GM12878 (cell line): ENCODE measurements at regions of chr6 and their contacts with region 1.

Region 1: GRCh38 chr6:32666420-32667300 is at the start of gene HLA-DQB1:
- DNase-seq: peak; percentile 77
- ATAC-seq: peak; percentile 70
- H3K4me3 ChIP-seq: peak within 1 kb of the TSS; percentile 55; the same call in 1 of the 2 replicates
- H3K27ac ChIP-seq: peak within 1 kb of the TSS; percentile 92
- H3K4me1 ChIP-seq: peaks cover 22% of the 10 kb centered on the region
- H3K27me3 ChIP-seq: no peaks in the 10 kb centered on the region
- CTCF ChIP-seq: no peak
- EP300 ChIP-seq: no peak
- POLR2A ChIP-seq: peak; percentile 72
- RAD21 ChIP-seq: no peak
- polyA plus RNA-seq, gene HLA-DQB1: 38.1 to 66.1 TPM

Region 2: DNA sequence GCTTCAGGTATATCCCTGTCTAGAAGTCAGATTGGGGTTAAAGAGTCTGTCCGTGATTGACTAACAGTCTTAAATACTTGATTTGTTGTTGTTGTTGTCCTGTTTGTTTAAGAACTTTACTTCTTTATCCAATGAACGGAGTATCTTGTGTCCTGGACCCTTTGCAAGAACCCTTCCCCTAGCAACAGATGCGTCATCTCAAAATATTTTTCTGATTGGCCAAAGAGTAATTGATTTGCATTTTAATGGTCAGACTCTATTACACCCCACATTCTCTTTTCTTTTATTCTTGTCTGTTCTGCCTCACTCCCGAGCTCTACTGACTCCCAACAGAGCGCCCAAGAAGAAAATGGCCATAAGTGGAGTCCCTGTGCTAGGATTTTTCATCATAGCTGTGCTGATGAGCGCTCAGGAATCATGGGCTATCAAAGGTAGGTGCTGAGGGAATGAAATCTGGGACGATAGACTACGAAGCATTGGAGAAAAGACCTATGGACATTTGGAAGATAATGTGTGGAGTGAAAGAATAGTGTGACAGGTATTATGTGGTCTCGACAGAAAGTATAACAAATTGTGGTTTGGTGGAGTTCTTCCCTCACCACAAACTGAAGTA is 227.0 kb before region 1 on chr6 and contains the start of gene HLA-DRA:
- CTCF ChIA-PET with region 1: no interaction called
- POLR2A ChIA-PET with region 1: interaction called, 20 read pairs
- RAD21 ChIA-PET with region 1: interaction called, 8 read pairs
- SMC1A ChIA-PET with region 1: interaction called, 6 read pairs
- in situ Hi-C with region 1: no loop called
- intact Hi-C with region 1: no loop called
- DNase-seq: peak; percentile 99
- ATAC-seq: peak; percentile 71
- H3K4me3 ChIP-seq: peak within 1 kb of the TSS; percentile 99
- H3K27ac ChIP-seq: peak within 1 kb of the TSS; percentile 100
- H3K4me1 ChIP-seq: peaks cover 29% of the 10 kb centered on the region
- H3K27me3 ChIP-seq: no peaks in the 10 kb centered on the region
- CTCF ChIP-seq: no peak
- EP300 ChIP-seq: peak; percentile 66 to 68; a peak in 3 of 4 replicates
- POLR2A ChIP-seq: peak; percentile 95
- RAD21 ChIP-seq: no peak
- polyA plus RNA-seq, gene HLA-DRA: 4,131 to 6,024 TPM

Region 3: GRCh38 chr6:32609731-32610640 is 56.7 kb before region 1 on chr6:
- CTCF ChIA-PET with region 1: no interaction called
- POLR2A ChIA-PET with region 1: interaction called, 6 read pairs
- RAD21 ChIA-PET with region 1: interaction called, 5 read pairs
- SMC1A ChIA-PET with region 1: interaction called, 3 read pairs
- in situ Hi-C with region 1: no loop called
- intact Hi-C with region 1: loop called (anchors 2 kb)
- DNase-seq: peak; percentile 100
- ATAC-seq: peak; percentile 84
- H3K4me3 ChIP-seq: peak overlapping the region; percentile 3; the same call in 1 of the 2 replicates
- H3K27ac ChIP-seq: peak overlapping the region; percentile 95
- H3K4me1 ChIP-seq: peaks cover 17% of the 10 kb centered on the region
- H3K27me3 ChIP-seq: no peaks in the 10 kb centered on the region
- CTCF ChIP-seq: no peak
- EP300 ChIP-seq: peak; percentile 30 to 68; a peak in 2 of 4 replicates
- POLR2A ChIP-seq: peak; percentile 59; the same call in 1 of the 2 replicates
- RAD21 ChIP-seq: no peak

Region 4: GRCh38 chr6:32679492-32679891 is 12.8 kb after region 1 on chr6:
- CTCF ChIA-PET with region 1: interaction called, 4 read pairs
- POLR2A ChIA-PET with region 1: interaction called, 130 read pairs
- RAD21 ChIA-PET with region 1: interaction called, 4 read pairs
- SMC1A ChIA-PET with region 1: interaction called, 94 read pairs
- in situ Hi-C with region 1: no loop called
- intact Hi-C with region 1: loop called (anchors 2 kb)
- DNase-seq: no peak
- ATAC-seq: peak; percentile 27; the same call in 1 of the 3 replicates
- H3K4me3 ChIP-seq: no peak overlapping the region
- H3K27ac ChIP-seq: no peak overlapping the region
- H3K4me1 ChIP-seq: peaks cover 8% of the 10 kb centered on the region; the same call in 1 of the 2 replicates
- H3K27me3 ChIP-seq: no peaks in the 10 kb centered on the region
- CTCF ChIP-seq: no peak
- EP300 ChIP-seq: no peak
- POLR2A ChIP-seq: no peak
- RAD21 ChIP-seq: no peak

Region 5: DNA sequence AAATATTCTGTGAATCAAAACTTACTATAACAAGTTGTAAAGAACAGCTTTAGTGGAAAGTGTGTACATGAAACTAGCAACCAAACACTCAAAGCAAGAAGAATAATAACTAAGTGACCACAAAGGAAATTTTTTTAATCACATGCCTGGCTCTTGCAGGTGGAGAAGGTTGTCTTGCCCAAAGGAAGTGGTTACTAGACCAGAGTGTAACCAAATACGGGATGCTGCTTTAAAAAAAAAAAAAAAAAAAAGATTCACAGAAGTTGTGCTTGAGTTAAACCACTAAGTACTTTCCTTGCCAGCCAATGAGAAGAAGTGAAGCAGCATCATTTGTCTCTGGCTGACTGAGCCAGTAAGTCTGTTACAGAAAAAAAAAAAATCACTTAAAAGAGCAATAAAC is 18.9 kb after region 1 on chr6:
- CTCF ChIA-PET with region 1: interaction called, 16 read pairs
- POLR2A ChIA-PET with region 1: interaction called, 130 read pairs
- RAD21 ChIA-PET with region 1: interaction called, 19 read pairs
- SMC1A ChIA-PET with region 1: interaction called, 94 read pairs
- in situ Hi-C with region 1: no loop called
- intact Hi-C with region 1: loop called (anchors 2 kb)
- DNase-seq: peak; percentile 95
- ATAC-seq: peak; percentile 89
- H3K4me3 ChIP-seq: no peak overlapping the region
- H3K27ac ChIP-seq: peak overlapping the region; percentile 40; the same call in 1 of the 2 replicates
- H3K4me1 ChIP-seq: peaks cover 16% of the 10 kb centered on the region; the same call in 1 of the 2 replicates
- H3K27me3 ChIP-seq: no peaks in the 10 kb centered on the region
- CTCF ChIP-seq: no peak
- EP300 ChIP-seq: peak; percentile 74 to 99; a peak in 3 of 4 replicates
- POLR2A ChIP-seq: no peak
- RAD21 ChIP-seq: no peak

Region 6: GRCh38 chr6:32752580-32752979 is 85.9 kb after region 1 on chr6:
- CTCF ChIA-PET with region 1: no interaction called
- POLR2A ChIA-PET with region 1: no interaction called
- RAD21 ChIA-PET with region 1: no interaction called
- SMC1A ChIA-PET with region 1: no interaction called
- in situ Hi-C with region 1: no loop called
- intact Hi-C with region 1: no loop called
- DNase-seq: no peak
- ATAC-seq: no peak
- H3K4me3 ChIP-seq: no peak overlapping the region
- H3K27ac ChIP-seq: no peak overlapping the region
- H3K4me1 ChIP-seq: no peaks in the 10 kb centered on the region
- H3K27me3 ChIP-seq: peaks cover 0 to 2% of the 10 kb centered on the region in 2 experiments; a peak in 2 of 4 replicates
- CTCF ChIP-seq: no peak
- EP300 ChIP-seq: no peak
- POLR2A ChIP-seq: no peak
- RAD21 ChIP-seq: no peak

Region 7: GRCh38 chr6:32763427-32763826 is 96.8 kb after region 1 on chr6 and contains the start of gene HLA-DQB2:
- CTCF ChIA-PET with region 1: no interaction called
- POLR2A ChIA-PET with region 1: interaction called, 7 read pairs
- RAD21 ChIA-PET with region 1: interaction called, 8 read pairs
- SMC1A ChIA-PET with region 1: interaction called, 5 read pairs
- in situ Hi-C with region 1: loop called (anchors 5 kb)
- intact Hi-C with region 1: no loop called
- DNase-seq: no peak
- ATAC-seq: no peak
- H3K4me3 ChIP-seq: no peak within 1 kb of the TSS
- H3K27ac ChIP-seq: no peak within 1 kb of the TSS
- H3K4me1 ChIP-seq: no peaks in the 10 kb centered on the region
- H3K27me3 ChIP-seq: peaks cover 3% of the 10 kb centered on the region in 2 experiments; a peak in 3 of 4 replicates
- CTCF ChIP-seq: no peak
- EP300 ChIP-seq: no peak
- POLR2A ChIP-seq: no peak
- RAD21 ChIP-seq: no peak
- polyA plus RNA-seq, gene HLA-DQB2: 6.6 to 9.5 TPM